AG04449 (cell line): ENCODE measurements at regions of chr15 and their contacts with region 1.

Region 1: DNA sequence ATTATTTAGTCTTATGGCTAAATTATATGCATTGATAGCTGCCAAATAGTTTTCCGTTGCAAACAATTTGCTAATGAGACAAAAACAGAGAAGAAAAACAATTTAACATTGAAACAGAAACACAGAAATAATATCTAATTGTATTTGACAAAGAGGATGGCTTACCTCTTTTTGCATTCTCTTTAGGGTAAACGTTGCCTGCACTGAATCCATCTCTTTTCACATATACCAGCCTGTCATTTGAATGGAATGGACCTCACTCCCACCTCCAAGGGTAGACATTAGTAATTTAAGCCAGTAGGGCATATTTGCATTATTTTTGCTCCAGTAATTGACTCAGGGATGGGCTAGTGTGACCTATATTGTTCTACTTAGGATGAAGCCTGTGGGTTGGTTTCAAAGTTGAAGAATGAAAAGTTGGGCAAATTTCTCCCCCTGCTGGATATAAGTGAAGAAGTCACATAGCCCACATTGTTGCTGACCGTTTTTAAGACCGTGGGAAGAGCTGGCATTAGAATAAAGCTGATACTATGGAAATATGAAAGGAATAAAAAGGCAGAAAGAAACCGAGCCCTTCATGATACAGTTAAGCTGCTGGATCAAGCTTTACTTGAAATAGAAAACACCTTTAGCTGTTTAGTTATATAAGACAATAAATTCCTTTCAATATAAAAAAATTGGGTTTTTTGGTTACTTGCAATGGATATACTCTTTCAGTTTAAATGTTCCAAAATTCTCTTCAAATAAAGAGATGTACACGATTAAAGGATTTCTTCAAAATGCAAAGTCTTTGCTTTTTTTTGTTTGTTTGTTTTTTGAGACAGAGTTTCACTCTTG is 26.9 kb downstream of the PIERCE2 start:
- DNase-seq: peak; percentile 7
- H3K4me3 ChIP-seq: no peak overlapping the region
- CTCF ChIP-seq: peak; percentile 53

Region 2: DNA sequence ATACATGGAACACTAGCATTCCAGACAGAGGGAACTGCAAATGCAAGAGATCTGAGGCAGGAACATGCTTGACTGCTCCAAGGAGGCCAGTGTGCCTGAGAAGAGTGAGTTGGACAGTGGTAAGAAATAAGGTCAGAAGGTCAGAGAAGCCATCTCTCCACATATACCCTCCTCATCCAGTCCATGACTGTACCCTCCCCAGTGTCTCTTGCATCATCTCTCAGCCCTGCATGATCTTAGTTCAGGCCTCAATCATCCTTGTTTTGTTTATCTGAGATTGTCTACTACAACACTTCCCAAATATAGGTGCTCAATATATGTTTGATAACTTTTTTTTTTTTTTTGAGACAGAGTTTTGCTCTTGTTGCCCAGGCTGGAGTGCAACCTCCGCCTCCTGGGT is 233.0 kb before region 1 on chr15:
- CTCF ChIA-PET with region 1: interaction called, 10 read pairs
- POLR2A ChIA-PET with region 1: no interaction called
- DNase-seq: no peak
- H3K4me3 ChIP-seq: no peak overlapping the region
- CTCF ChIP-seq: no peak

Region 3: DNA sequence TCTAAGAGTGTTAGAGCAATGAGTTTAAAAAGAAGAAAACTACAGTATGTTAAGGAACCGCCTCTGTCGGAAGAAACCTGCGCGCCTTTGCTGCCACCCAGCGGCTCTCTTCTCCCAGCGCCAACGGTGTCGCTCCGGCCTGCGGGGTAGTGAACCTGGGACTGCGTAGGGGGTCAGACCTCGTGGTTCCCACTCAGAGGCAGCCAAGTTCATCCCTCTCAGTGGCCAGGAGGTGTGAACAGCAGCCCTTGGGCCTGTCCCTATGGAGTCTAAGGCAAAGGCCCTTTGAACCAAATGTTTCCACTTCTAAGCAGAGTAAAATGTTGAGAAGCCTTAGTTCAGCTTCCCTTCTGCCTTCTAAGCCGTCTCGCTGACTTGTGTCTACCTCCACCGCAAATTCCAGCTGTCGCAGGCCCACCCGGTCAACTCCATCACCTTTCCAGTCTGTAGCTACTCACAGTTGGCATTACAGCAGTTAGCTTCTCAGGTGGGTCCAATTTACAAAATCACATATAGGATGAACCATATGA is 144.6 kb before region 1 on chr15:
- CTCF ChIA-PET with region 1: interaction called, 18 read pairs
- POLR2A ChIA-PET with region 1: no interaction called
- DNase-seq: no peak
- H3K4me3 ChIP-seq: peak overlapping the region; percentile 79
- CTCF ChIP-seq: peak; percentile 91

Region 4: DNA sequence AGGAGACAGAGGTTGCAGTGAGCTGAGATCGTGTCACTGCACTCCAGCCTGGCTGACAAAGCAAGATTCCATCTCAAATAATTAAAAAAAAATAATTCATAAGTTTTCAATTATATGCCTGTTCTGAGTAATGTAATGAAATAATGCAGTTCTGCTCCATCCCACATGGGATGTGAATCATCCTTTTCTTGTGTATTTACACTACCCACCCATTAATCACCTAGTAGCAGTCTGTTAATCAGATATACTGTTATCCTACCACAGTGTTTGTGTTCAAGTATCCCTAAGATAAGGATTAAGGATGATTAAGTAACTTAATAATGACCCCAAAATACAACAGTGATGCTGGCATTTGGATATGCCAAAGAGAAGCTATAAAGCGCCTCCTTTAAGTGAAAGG is 77.4 kb before region 1 on chr15:
- CTCF ChIA-PET with region 1: interaction called, 10 read pairs
- POLR2A ChIA-PET with region 1: no interaction called
- DNase-seq: no peak
- H3K4me3 ChIP-seq: no peak overlapping the region
- CTCF ChIP-seq: no peak

Region 5: DNA sequence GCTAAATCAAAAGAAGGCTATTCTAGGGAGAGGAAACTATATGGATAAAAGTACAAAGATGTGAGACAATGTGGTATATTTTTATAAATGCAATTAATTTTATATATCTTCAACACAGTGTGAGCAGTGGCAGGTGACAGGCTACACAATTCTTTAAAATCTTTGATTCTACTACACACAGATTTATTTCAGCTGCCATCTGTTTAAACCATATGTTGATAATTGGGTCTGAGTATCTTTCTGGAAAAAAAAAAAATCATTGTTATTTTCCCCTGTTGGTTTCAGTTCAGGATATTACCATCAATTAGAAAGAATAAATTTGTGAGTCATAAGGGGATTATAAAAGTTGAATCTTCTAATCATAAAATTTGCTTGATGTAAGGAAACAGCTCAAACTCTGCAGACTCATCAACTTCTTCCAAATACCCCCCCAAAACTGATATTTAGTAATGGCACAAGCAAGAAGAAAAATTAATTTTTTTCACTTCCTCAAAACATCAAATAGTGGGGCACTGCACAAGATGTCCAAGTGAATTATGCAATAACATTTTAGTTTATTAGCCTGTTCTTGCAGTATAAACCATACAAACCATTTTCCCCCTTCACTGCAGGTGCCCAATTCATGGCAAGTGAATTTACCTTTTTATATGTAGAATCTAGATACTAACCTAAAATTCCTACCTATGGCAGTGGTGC is 14.9 kb before region 1 on chr15:
- CTCF ChIA-PET with region 1: interaction called, 27 read pairs
- POLR2A ChIA-PET with region 1: no interaction called
- DNase-seq: no peak
- H3K4me3 ChIP-seq: no peak overlapping the region
- CTCF ChIP-seq: no peak

Region 6: GRCh38 chr15:55552926-55553325 is 117.7 kb after region 1 on chr15:
- CTCF ChIA-PET with region 1: no interaction called
- POLR2A ChIA-PET with region 1: no interaction called
- DNase-seq: peak; percentile 7
- H3K4me3 ChIP-seq: no peak overlapping the region
- CTCF ChIP-seq: no peak